ENCODE measurements at regions of chr10 and their contacts with region 1.

Region 1: DNA sequence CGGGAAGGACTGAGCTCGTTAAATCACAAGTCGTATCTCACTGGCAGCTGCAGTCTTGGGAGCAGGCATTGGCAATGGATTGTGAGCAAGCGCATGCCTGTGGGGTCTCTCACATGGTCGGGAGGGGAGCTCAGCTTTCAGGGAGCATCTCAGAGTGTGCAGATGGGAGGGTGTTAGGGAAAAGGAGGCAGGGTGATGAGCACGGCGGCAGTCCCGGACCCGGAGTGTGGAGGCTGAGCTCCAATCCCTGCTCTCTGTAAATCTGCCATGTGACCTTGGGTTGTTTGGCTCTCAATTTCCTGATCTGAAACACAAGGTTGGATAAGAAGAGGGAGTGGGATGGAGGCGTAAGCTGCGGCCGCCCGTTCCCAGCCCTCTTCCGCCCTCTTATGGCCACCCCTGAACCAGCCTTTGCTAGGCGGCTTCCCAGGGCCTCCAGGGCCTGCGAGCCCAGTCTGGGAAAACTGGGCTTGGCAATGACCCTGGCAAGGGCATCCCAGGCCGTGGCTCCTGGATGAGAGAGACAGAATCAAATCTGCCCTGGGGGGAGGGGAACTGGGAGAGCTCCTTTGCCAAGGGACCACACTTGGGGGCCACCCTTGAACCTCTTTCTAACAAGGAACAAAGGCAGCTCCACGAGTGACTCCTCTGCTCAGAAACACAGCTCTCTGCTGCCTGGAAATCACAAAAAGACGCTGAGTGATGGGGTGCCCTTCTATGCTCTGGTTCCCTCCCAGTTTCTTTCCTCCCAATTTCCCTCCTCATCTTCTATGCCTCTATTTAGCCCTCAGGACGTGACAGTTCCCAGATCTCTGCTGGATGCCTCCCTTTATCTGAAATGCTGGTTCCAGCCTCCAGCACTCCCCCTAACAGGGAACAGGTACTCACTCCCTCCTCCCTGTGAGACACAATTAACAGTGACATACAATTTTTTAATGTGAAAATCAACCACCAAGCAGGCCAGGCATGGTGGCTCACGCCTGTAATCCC is 41.7 kb upstream of the LOXL4 start:
- DNase-seq: no peak
- H3K4me3 ChIP-seq: peak overlapping the region in 3 of 4 donors; percentile 18 to 37 (median 23)
- H3K27ac ChIP-seq: no peak overlapping the region
- H3K4me1 ChIP-seq: peaks cover 3 to 14% (median 11%) of the 10 kb centered on the region in 4 donors
- H3K27me3 ChIP-seq: no peaks in the 10 kb centered on the region
- CTCF ChIP-seq: peak; percentile 83 to 86 (median 85)
- EP300 ChIP-seq: no peak
- POLR2A ChIP-seq: no peak

Region 2: DNA sequence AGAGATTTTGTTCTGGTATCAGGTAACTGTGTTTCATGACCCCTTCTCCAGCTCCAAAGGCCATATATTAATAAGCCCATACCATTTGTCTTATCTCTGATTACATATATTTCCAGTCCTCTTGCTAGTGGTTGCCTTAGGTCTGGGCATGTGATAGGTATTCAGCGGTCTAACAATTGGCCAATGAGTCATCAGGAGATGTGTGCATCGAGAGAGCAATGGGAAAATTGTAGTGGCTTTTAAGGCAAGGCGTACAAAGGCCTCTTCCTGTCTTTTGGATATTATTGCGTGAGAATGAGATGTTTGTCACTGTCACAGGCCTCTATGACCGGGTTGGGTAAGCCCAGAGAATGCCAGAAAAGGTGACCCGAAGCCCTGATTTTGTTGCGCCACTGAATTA is 499.2 kb before region 1 on chr10:
- intact Hi-C with region 1: no loop called
- DNase-seq: no peak
- H3K4me3 ChIP-seq: no peak overlapping the region
- H3K27ac ChIP-seq: no peak overlapping the region
- H3K4me1 ChIP-seq: no peaks in the 10 kb centered on the region
- H3K27me3 ChIP-seq: peaks cover 0 to 23% (median 0%) of the 10 kb centered on the region in 4 donors
- CTCF ChIP-seq: no peak
- EP300 ChIP-seq: no peak
- POLR2A ChIP-seq: no peak

Region 3: DNA sequence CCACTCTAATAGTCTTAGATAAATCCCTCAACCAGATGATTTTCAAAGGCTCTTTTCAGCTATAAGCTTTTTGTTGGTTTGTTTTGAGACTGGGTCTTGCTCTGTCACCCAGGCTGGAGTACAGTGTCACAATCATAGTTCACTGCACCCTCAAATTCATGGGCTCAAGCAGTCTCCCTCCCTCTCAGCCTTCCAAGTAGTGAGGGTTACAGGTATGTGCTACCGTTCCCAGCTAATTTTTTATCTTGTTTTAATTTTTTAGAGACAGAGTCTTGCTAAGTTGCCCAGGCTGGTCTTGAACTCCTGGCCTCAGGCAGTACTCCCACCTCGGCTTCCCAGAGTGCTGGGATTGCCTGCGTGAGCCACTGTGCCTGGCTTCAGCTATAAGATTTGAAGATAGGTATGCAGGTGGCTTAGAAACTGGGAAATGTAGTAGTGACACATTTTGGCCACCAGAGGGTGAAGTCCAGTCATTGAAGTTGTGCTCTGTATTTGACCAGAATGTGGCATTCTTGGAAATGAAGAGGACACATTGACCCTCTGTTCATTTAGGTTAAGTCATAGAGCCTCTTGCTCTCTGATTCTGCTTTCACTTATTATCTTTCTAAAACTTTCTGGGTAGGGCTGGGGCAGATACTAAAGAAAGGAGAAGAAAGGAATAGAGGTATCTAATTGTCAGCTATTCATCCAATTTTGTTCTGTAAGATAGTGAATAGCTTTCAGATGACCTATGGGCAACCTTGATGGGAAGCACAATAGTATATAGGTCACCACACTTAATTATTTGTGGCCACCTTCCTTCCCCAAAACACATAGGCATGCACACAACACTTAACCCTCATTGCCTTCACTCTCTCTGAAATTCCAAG is 139.2 kb before region 1 on chr10:
- intact Hi-C with region 1: loop called (anchors 1 kb)
- DNase-seq: no peak
- H3K4me3 ChIP-seq: no peak overlapping the region
- H3K27ac ChIP-seq: no peak overlapping the region
- H3K4me1 ChIP-seq: peaks cover 7 to 13% (median 11%) of the 10 kb centered on the region in 4 donors
- H3K27me3 ChIP-seq: no peaks in the 10 kb centered on the region
- CTCF ChIP-seq: peak; percentile 67 to 82 (median 75)
- EP300 ChIP-seq: no peak
- POLR2A ChIP-seq: no peak

Region 4: DNA sequence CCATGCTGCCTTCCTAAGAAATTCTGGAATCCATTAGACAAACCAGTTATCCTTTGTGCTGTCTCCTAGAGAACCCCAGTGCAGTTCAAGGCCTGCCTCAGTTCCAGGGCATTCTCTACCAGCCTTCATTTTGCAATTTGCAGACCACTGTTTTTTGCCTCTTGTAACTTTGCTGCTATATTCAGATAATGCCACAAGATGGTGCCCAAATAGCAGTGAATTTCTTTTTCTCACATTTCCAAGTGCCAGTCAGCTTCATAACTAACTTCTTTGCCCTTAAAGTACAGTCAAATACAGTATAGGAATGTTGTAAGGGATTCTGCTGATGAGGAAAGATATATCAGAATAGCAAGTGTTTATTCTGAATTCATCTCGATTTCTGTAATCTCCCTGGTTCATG is 66.8 kb before region 1 on chr10:
- intact Hi-C with region 1: loop called (anchors 5 kb)
- DNase-seq: no peak
- H3K4me3 ChIP-seq: no peak overlapping the region
- H3K27ac ChIP-seq: no peak overlapping the region
- H3K4me1 ChIP-seq: peaks cover 0 to 41% (median 37%) of the 10 kb centered on the region in 4 donors
- H3K27me3 ChIP-seq: no peaks in the 10 kb centered on the region
- CTCF ChIP-seq: peak; percentile 34 to 48 (median 42)
- EP300 ChIP-seq: no peak
- POLR2A ChIP-seq: no peak

Region 5: DNA sequence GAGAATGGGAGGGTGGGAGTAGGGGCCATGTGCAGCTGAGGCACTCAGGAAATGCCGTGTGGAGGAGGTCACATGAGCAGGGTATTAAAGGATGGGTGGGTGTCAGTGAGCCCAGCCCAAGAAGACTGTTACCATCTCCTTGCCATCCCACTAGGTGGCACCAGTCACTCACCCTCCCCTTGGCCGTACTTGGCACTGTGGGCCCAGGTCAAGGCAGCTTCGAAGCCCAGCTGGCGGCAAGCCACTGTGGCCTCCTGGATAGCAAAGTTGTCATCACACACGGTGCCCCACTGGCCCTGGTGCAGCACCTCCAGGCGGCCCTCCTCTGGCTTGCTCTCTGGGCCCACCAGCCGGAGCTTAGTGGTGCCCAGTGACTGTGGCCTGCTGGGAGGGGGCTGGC is 47.1 kb before region 1 on chr10:
- intact Hi-C with region 1: loop called (anchors 5 kb)
- DNase-seq: peak; percentile 90
- H3K4me3 ChIP-seq: no peak overlapping the region
- H3K27ac ChIP-seq: no peak overlapping the region
- H3K4me1 ChIP-seq: peaks cover 0 to 42% (median 31%) of the 10 kb centered on the region in 4 donors
- H3K27me3 ChIP-seq: no peaks in the 10 kb centered on the region
- CTCF ChIP-seq: peak; percentile 47 to 62 (median 54)
- EP300 ChIP-seq: no peak
- POLR2A ChIP-seq: no peak